HAP-1 (cell line): ENCODE measurements at regions of chr1 and their contacts with region 1.

Region 1: GRCh38 chr1:17125756-17126237 is 6.5 kb upstream of the PADI2 start:
- DNase-seq: peak; percentile 67 to 94
- H3K4me3 ChIP-seq: no peak overlapping the region
- H3K4me1 ChIP-seq: peaks cover 13% of the 10 kb centered on the region
- H3K27me3 ChIP-seq: no peaks in the 10 kb centered on the region

Region 2: GRCh38 chr1:17236779-17237560 is 111.2 kb after region 1 on chr1:
- in situ Hi-C with region 1: loop called (anchors 5 kb)
- DNase-seq: peak; percentile 61 to 95
- H3K4me3 ChIP-seq: no peak overlapping the region
- H3K4me1 ChIP-seq: no peaks in the 10 kb centered on the region; the same call in 1 of the 2 replicates
- H3K27me3 ChIP-seq: peaks cover 10% of the 10 kb centered on the region

Region 3: DNA sequence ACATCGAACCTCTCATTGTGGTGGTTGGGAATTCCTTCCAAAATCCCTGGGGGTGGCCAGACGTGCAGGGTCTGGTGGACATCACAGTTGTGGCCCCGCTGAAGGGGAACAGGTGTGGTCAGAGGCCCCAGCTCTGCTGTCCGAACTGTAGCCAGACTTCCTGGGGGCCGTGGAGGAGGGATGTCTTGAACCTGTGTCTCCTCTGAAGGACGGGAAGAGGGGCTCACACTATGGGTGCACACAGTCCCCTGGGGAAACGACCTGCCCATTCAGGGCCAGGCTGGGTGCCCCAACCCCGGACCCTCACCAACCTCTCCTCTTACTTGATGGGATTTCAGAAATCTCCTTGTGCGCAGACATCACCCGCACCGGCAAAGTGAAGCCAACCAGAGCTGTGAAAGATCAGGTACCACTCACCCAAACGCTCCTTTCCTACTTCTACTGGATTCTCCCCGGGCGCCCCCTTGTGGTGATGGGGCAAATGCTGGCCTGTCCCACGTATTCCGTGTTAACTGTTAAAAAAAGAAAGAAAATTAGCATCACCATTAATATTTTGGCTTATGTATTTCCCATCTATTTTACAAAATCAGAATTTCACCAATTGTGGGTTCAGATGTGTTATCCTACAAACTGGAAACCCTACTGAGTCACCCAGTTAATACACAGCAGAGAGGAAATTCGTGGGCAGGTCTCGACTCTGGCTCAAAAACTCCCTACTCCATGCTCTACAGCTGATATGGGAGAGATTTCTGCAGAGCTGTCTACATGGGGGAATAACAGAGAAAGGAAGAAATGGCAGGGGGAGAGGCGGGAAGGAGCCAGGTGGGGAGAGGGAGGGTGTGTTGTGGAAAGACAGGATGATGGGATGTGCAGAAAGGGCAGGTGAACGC is 210.3 kb after region 1 on chr1:
- in situ Hi-C with region 1: loop called (anchors 10 kb)
- DNase-seq: peak; percentile 18 to 90
- H3K4me3 ChIP-seq: no peak overlapping the region
- H3K4me1 ChIP-seq: no peaks in the 10 kb centered on the region
- H3K27me3 ChIP-seq: no peaks in the 10 kb centered on the region

Region 4: DNA sequence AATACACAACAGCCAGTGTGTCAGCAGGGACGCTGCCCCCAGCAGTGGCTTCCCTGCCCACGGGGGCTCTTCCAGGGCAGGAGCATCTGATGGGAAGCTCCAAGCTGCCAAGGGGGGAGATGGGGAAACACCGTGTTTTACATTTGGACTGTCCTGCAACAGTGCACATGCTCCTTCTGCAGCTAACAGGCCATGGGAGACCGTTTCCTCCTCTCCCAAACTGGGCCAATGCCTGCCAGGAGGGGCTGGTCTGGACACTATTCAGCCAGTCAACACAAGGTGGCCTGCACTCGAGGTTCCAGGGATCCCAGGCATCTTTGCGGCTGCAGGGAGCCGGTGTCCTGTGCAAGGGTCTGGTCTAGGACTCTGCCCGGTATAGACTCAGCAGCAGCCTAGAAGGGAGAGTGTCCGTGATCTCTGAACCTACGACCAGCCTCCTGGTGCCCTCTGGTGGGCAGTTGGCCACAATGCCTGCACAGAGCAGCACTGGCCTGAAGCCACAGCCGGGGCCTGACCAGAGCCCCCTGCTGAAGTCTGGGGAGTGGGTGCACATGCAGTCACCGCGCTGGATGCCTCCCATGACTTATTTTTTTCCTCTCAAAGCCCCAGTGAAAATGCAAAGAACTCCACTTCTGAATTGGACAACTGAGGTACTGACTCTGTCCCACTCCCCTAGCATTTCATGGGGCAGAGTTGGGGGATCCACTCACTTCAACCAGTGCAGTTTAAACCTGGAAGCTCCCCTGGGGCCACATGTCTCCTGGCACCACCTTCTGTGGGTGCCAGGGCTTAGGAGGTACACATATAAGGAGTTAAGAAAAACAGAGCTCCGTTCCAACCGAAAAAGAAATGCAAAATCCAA is 280.3 kb after region 1 on chr1:
- in situ Hi-C with region 1: loop called (anchors 10 kb)
- DNase-seq: peak; percentile 36 to 81
- H3K4me3 ChIP-seq: no peak overlapping the region
- H3K4me1 ChIP-seq: no peaks in the 10 kb centered on the region; the same call in 1 of the 2 replicates
- H3K27me3 ChIP-seq: no peaks in the 10 kb centered on the region